ENCODE measurements at regions of chr2 and their contacts with region 1.

Region 1: GRCh38 chr2:156341452-156342253 is 9.1 kb upstream of the NR4A2 start:
- DNase-seq: peak; percentile 94
- H3K4me3 ChIP-seq: peak overlapping the region; percentile 86 to 100 (median 96)
- H3K27ac ChIP-seq: peak overlapping the region; percentile 100
- H3K4me1 ChIP-seq: peaks cover 16 to 48% (median 27%) of the 10 kb centered on the region in 4 donors
- H3K27me3 ChIP-seq: no peaks in the 10 kb centered on the region
- CTCF ChIP-seq: peak in 1 of 5 experiments; percentile 1
- EP300 ChIP-seq: no peak
- POLR2A ChIP-seq: peak; percentile 96

Region 2: GRCh38 chr2:156156580-156156979 is 185.1 kb before region 1 on chr2:
- in situ Hi-C with region 1: no loop called
- intact Hi-C with region 1: no loop called
- DNase-seq: peak; percentile 9
- H3K4me3 ChIP-seq: no peak overlapping the region
- H3K27ac ChIP-seq: no peak overlapping the region
- H3K4me1 ChIP-seq: no peaks in the 10 kb centered on the region
- H3K27me3 ChIP-seq: no peaks in the 10 kb centered on the region
- CTCF ChIP-seq: peak in 4 of 5 experiments; percentile 7 to 31 (median 24)
- EP300 ChIP-seq: no peak
- POLR2A ChIP-seq: no peak

Region 3: GRCh38 chr2:156383178-156383577 is 41.5 kb after region 1 on chr2:
- in situ Hi-C with region 1: no loop called
- intact Hi-C with region 1: no loop called
- DNase-seq: no peak
- H3K4me3 ChIP-seq: no peak overlapping the region
- H3K27ac ChIP-seq: no peak overlapping the region
- H3K4me1 ChIP-seq: no peaks in the 10 kb centered on the region
- H3K27me3 ChIP-seq: no peaks in the 10 kb centered on the region
- CTCF ChIP-seq: no peak
- EP300 ChIP-seq: no peak
- POLR2A ChIP-seq: no peak

Region 4: GRCh38 chr2:156400706-156401678 is 59.3 kb after region 1 on chr2:
- in situ Hi-C with region 1: loop called in 1 of 4 experiments (anchors 10 kb)
- intact Hi-C with region 1: no loop called
- DNase-seq: peak; percentile 77
- H3K4me3 ChIP-seq: peak overlapping the region; percentile 31 to 76 (median 63)
- H3K27ac ChIP-seq: peak overlapping the region; percentile 90 to 95 (median 92)
- H3K4me1 ChIP-seq: peaks cover 4 to 21% (median 13%) of the 10 kb centered on the region in 4 donors
- H3K27me3 ChIP-seq: no peaks in the 10 kb centered on the region
- CTCF ChIP-seq: no peak
- EP300 ChIP-seq: no peak
- POLR2A ChIP-seq: no peak

Region 5: GRCh38 chr2:156435715-156436496 is 94.3 kb after region 1 on chr2 and contains the start of gene GPD2:
- in situ Hi-C with region 1: loop called in 2 of 4 experiments (anchors 25 kb)
- intact Hi-C with region 1: no loop called
- DNase-seq: peak; percentile 92
- H3K4me3 ChIP-seq: peak within 1 kb of the TSS; percentile 45 to 79 (median 54)
- H3K27ac ChIP-seq: peak within 1 kb of the TSS; percentile 93 to 96 (median 96)
- H3K4me1 ChIP-seq: peaks cover 0 to 45% (median 29%) of the 10 kb centered on the region in 4 donors
- H3K27me3 ChIP-seq: no peaks in the 10 kb centered on the region
- CTCF ChIP-seq: peak in 1 of 5 experiments; percentile 40
- EP300 ChIP-seq: no peak
- POLR2A ChIP-seq: peak; percentile 90
- total RNA-seq, gene GPD2: 65.5 to 161 (median 98.6) TPM

Region 6: DNA sequence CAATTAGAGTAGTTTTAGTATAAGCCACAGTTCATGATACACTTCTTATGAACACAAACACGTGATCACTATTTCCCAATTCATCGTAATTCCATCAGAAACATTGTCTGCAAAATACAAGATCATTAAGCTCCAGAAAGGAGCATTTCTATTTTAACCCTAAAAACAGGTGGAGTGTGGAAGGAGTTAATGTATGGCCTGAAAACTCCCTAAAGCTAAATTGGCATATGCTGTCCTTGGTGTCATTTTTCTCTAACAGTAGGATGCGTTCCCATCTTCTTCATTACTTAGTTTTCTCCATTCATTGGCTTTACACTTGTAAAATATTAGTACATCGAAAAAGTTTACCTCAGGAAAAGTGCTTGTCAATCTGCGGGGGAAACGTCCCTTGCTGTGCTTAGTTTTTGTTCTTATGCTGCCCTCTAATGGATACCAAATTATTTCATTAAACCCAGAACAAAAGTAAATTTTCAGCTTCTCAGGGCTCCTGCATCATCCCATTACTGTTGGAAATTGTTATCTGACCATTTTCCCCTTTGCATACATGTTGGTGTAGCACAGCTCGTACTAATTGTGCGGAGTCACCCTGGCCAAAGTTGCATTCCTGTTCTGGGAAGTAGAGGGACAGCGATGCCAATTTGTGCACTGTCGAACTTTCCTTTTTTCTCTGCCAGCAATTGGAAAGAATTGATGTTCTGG is 247.9 kb after region 1 on chr2:
- in situ Hi-C with region 1: loop called in 2 of 4 experiments (anchors 25 kb)
- intact Hi-C with region 1: no loop called
- DNase-seq: peak; percentile 12
- H3K4me3 ChIP-seq: no peak overlapping the region
- H3K27ac ChIP-seq: no peak overlapping the region
- H3K4me1 ChIP-seq: peaks cover 0 to 4% (median 0%) of the 10 kb centered on the region in 4 donors
- H3K27me3 ChIP-seq: no peaks in the 10 kb centered on the region
- CTCF ChIP-seq: peak; percentile 32 to 47 (median 41)
- EP300 ChIP-seq: no peak
- POLR2A ChIP-seq: no peak

Measured in transverse colon (tissue), 4 donors.